ENCODE measurements at regions of chr1 and their contacts with region 1.

Region 1: DNA sequence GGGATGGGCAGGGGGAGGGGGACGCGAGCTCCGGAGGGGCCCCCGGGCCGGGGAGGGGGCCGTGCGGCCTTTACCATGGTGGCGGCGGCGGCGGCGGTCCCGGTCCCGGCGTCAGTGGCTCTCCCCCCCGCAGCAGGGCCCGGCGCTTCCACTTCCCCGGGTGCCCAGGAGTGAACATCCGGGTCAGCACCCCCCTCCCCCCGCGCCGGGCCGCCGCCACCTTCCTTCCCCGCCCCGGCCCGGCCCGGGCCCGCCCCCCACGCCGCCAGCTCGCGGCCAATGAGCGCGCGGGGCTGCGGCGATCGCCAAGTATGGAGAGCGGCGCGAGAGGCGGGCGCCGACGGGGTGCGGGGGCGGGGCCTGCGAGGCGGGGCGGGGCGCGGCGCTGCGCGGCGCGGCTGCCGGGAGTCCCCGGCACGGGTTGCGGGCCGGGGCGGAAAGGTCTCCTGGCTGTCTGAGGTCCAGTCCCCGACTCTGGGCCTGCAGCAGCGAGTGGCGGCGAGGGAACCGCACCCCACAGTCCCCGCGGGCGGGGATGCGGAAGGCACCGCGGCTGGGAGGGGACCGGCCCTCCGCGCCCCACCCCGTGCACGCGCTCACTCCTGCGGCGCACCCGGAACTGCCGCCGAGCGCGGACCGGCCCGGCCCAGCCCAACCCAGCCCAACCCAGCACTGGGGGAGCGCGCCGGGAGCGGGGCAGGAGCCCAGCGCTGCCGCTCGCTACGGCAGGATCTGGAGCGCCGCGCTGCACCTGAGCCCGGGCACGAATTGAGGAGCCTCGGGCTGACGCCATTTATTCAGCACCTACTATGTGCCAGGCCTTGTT is at the start of gene CAPZB:
- DNase-seq: peak; percentile 93
- H3K4me3 ChIP-seq: peak within 1 kb of the TSS; percentile 95 to 100
- H3K27ac ChIP-seq: peak within 1 kb of the TSS; percentile 100
- H3K4me1 ChIP-seq: peaks cover 39% of the 10 kb centered on the region
- H3K27me3 ChIP-seq: no peaks in the 10 kb centered on the region
- CTCF ChIP-seq: peak in 1 of 4 experiments; percentile 19
- POLR2A ChIP-seq: peak; percentile 93
- total RNA-seq, gene CAPZB: 139 to 150 TPM

Region 2: GRCh38 chr1:19341201-19342072 is 144.1 kb before region 1 on chr1:
- intact Hi-C with region 1: loop called (anchors 5 kb)
- DNase-seq: peak; percentile 43
- H3K4me3 ChIP-seq: no peak overlapping the region
- H3K27ac ChIP-seq: no peak overlapping the region
- H3K4me1 ChIP-seq: no peaks in the 10 kb centered on the region
- H3K27me3 ChIP-seq: no peaks in the 10 kb centered on the region
- CTCF ChIP-seq: peak; percentile 78 to 86 (median 81)
- POLR2A ChIP-seq: no peak

Region 3: GRCh38 chr1:19405761-19406487 is 79.7 kb before region 1 on chr1:
- intact Hi-C with region 1: loop called (anchors 10 kb)
- DNase-seq: no peak
- H3K4me3 ChIP-seq: no peak overlapping the region
- H3K27ac ChIP-seq: peak overlapping the region; percentile 54 to 68
- H3K4me1 ChIP-seq: peaks cover 7% of the 10 kb centered on the region
- H3K27me3 ChIP-seq: no peaks in the 10 kb centered on the region
- CTCF ChIP-seq: no peak
- POLR2A ChIP-seq: no peak

Region 4: DNA sequence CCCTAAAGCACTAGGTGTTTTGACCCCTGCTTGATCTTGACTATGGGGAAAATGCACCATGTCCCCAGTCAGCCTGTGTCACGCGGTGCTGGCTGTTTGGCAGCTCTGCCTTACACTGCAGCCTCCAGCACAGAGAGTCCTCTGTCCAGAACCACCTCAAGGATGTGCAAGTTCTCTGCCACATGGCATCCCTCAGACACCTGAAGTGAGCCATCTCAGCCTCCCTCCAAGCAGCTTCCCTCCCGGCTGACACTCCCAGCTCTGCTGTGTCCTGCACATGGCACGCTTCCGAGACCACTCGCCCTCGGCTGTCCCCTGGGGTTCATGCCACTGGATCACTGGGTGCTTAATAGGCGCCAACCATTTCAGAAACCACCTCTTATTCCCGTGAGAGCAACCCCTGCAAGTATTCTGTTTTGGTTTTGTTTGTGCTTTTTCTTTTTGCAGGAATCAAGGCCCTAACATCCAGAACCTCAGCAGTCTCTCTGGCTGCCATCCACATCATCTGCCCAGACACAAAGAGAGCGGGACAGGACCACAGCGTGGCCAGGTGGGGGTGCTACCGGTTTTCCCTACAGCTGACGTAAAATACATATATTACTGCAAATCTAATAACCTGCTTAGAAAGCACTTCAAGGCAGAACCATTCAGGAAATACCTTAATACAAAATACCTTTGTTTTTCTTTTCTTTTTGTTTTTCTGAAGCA is 46.0 kb before region 1 on chr1:
- intact Hi-C with region 1: loop called (anchors 2 kb)
- DNase-seq: peak; percentile 62
- H3K4me3 ChIP-seq: no peak overlapping the region
- H3K27ac ChIP-seq: peak overlapping the region; percentile 83 to 96
- H3K4me1 ChIP-seq: peaks cover 54% of the 10 kb centered on the region
- H3K27me3 ChIP-seq: no peaks in the 10 kb centered on the region
- CTCF ChIP-seq: peak in 3 of 4 experiments; percentile 35 to 60 (median 42)
- POLR2A ChIP-seq: no peak

Region 5: DNA sequence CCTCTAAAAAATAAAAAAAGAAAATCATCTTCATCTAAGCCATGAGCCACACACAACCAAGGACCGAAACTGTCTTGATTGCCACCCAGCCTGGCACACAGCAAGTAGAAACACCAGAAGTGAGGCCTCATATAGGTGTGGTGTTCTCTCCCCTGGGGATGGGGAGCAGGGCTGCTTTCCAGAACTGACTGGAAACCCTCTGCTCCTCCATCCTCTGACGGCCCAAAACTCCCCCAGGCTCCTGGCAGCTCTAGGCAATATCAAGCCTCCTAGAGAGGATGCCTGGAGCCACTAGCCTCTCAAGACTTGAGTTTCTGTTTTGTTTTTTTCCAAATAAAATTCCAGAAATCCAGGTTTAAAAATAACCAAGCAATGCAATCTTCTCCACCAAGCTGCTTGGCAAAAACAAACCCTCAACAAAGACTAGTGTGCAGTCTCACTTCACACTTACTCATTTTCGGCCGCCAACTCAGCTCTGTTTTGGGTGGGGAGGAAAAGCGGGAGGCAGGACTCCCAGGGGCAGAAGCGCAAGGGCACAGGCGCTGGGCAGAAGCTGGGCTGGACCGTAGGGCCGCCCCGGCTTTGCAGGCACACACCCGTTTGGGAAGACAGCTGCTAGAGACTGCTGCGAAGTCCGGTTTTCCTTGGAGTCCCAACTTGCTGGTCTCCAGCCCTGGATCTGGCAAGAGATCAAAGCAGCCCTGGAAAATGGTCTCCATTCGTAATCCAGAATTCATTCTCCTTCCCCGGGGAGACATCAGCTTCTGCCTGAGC is 77.9 kb after region 1 on chr1:
- intact Hi-C with region 1: loop called (anchors 5 kb)
- DNase-seq: peak; percentile 8
- H3K4me3 ChIP-seq: no peak overlapping the region
- H3K27ac ChIP-seq: peak overlapping the region; percentile 56 to 57
- H3K4me1 ChIP-seq: no peaks in the 10 kb centered on the region
- H3K27me3 ChIP-seq: no peaks in the 10 kb centered on the region
- CTCF ChIP-seq: no peak
- POLR2A ChIP-seq: no peak

Region 6: DNA sequence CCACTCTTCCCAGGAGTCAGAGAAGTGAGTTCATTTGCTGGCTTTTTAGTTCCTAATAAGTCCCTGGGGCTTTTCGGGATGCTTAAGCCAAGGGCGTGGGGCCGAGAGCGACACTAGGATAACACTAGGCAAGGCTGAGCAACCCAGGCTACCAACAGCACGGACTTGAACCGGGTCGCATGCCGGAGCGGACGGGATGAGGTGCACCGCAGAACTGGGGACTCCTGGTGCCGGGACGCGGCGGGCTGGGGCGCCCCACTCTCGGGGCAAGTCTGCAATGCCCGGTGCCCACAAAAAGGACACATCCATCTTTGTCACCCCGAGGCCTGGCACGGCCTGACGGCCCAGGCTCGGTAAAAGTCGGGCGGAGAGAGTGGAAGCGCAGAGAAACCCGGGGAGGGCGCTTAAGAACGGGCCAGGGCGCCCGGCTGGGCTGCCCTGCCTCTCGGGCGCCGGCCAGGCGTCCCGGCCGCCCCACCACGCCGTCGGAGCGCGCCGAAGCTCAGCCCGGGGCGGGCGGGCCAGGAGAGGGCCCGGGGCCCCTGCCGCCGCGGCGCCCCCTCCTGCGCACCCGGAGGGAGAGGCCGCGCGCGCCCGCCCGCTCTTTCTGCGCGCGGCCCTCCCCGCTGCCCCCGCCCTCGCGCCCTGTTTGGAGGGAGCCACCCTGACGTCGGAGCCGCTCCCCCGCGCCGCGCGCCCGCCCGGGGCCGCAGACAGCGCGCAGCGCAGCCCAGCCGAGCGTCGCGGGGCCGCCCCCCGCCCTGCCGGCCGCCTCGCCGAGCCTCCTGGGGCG is 158.2 kb after region 1 on chr1 and contains the start of gene NBL1:
- intact Hi-C with region 1: loop called (anchors 2 kb)
- DNase-seq: peak; percentile 84
- H3K4me3 ChIP-seq: peak within 1 kb of the TSS; percentile 81 to 94
- H3K27ac ChIP-seq: peak within 1 kb of the TSS; percentile 99
- H3K4me1 ChIP-seq: peaks cover 14% of the 10 kb centered on the region
- H3K27me3 ChIP-seq: no peaks in the 10 kb centered on the region
- CTCF ChIP-seq: peak in 1 of 4 experiments; percentile 9
- POLR2A ChIP-seq: peak; percentile 20
- total RNA-seq, gene NBL1: 268 to 514 TPM

Measured in prostate gland (tissue), 2 donors.